ENCODE measurements at regions of chr14 and their contacts with region 1.

Region 1: GRCh38 chr14:95348395-95349080 is 28.8 kb upstream of the CLMN start:
- DNase-seq: no peak
- H3K4me3 ChIP-seq: no peak overlapping the region
- H3K27ac ChIP-seq: no peak overlapping the region
- H3K4me1 ChIP-seq: no peaks in the 10 kb centered on the region
- H3K27me3 ChIP-seq: no peaks in the 10 kb centered on the region
- CTCF ChIP-seq: no peak
- EP300 ChIP-seq: no peak
- RAD21 ChIP-seq: peak; percentile 23; the same call in 1 of the 2 replicates

Region 2: GRCh38 chr14:95319312-95320021 is 29.1 kb before region 1 on chr14 and contains the start of gene CLMN:
- CTCF ChIA-PET with region 1: no interaction called
- POLR2A ChIA-PET with region 1: no interaction called
- DNase-seq: peak; percentile 89
- H3K4me3 ChIP-seq: peak within 1 kb of the TSS; percentile 75 to 97
- H3K27ac ChIP-seq: no peak within 1 kb of the TSS; a peak in 1 of 4 replicates
- H3K4me1 ChIP-seq: peaks cover 6 to 20% of the 10 kb centered on the region in 2 experiments; a peak in 2 of 4 replicates
- H3K27me3 ChIP-seq: no peaks in the 10 kb centered on the region
- CTCF ChIP-seq: no peak
- EP300 ChIP-seq: no peak
- RAD21 ChIP-seq: no peak
- polyA plus RNA-seq, gene CLMN: 1.4 TPM in 2 replicates

Region 3: GRCh38 chr14:95361373-95362137 is 13.0 kb after region 1 on chr14:
- CTCF ChIA-PET with region 1: interaction called, 12 read pairs
- POLR2A ChIA-PET with region 1: no interaction called
- DNase-seq: peak; percentile 61
- H3K4me3 ChIP-seq: no peak overlapping the region
- H3K27ac ChIP-seq: no peak overlapping the region
- H3K4me1 ChIP-seq: no peaks in the 10 kb centered on the region
- H3K27me3 ChIP-seq: no peaks in the 10 kb centered on the region
- CTCF ChIP-seq: peak; percentile 61
- EP300 ChIP-seq: no peak
- RAD21 ChIP-seq: peak; percentile 43